Esophagus muscularis mucosa (tissue), 4 donors: ENCODE measurements at regions of chr21 and their contacts with region 1.

Region 1: GRCh38 chr21:44873356-44874239 is at the start of gene PTTG1IP:
- DNase-seq: peak; percentile 99
- H3K4me3 ChIP-seq: peak within 1 kb of the TSS; percentile 84 to 99 (median 96)
- H3K27ac ChIP-seq: peak within 1 kb of the TSS; percentile 96 to 98 (median 97)
- H3K4me1 ChIP-seq: peaks cover 50 to 66% (median 60%) of the 10 kb centered on the region in 4 donors
- H3K27me3 ChIP-seq: no peaks in the 10 kb centered on the region
- CTCF ChIP-seq: no peak
- EP300 ChIP-seq: no peak
- POLR2A ChIP-seq: peak; percentile 80
- total RNA-seq, gene PTTG1IP: 222 to 382 (median 302) TPM

Region 2: GRCh38 chr21:44801468-44802395 is 71.9 kb before region 1 on chr21 and contains the start of gene UBE2G2:
- intact Hi-C with region 1: loop called (anchors 2 kb)
- DNase-seq: peak; percentile 94
- H3K4me3 ChIP-seq: peak within 1 kb of the TSS; percentile 82 to 99 (median 94)
- H3K27ac ChIP-seq: peak within 1 kb of the TSS; percentile 76 to 87 (median 81)
- H3K4me1 ChIP-seq: peaks cover 28 to 43% (median 36%) of the 10 kb centered on the region in 4 donors
- H3K27me3 ChIP-seq: no peaks in the 10 kb centered on the region
- CTCF ChIP-seq: no peak
- EP300 ChIP-seq: no peak
- POLR2A ChIP-seq: peak; percentile 66
- total RNA-seq, gene UBE2G2: 74.4 to 174 (median 81.7) TPM

Region 3: GRCh38 chr21:44817506-44817880 is 56.1 kb before region 1 on chr21:
- intact Hi-C with region 1: loop called (anchors 5 kb)
- DNase-seq: peak; percentile 95
- H3K4me3 ChIP-seq: peak overlapping the region; percentile 73 to 92 (median 85)
- H3K27ac ChIP-seq: peak overlapping the region; percentile 85 to 93 (median 90)
- H3K4me1 ChIP-seq: peaks cover 24 to 46% (median 39%) of the 10 kb centered on the region in 4 donors
- H3K27me3 ChIP-seq: no peaks in the 10 kb centered on the region
- CTCF ChIP-seq: no peak
- EP300 ChIP-seq: no peak
- POLR2A ChIP-seq: no peak